Spleen (tissue), 13 donors: ENCODE measurements at regions of chr4 and their contacts with region 1.

Region 1: DNA sequence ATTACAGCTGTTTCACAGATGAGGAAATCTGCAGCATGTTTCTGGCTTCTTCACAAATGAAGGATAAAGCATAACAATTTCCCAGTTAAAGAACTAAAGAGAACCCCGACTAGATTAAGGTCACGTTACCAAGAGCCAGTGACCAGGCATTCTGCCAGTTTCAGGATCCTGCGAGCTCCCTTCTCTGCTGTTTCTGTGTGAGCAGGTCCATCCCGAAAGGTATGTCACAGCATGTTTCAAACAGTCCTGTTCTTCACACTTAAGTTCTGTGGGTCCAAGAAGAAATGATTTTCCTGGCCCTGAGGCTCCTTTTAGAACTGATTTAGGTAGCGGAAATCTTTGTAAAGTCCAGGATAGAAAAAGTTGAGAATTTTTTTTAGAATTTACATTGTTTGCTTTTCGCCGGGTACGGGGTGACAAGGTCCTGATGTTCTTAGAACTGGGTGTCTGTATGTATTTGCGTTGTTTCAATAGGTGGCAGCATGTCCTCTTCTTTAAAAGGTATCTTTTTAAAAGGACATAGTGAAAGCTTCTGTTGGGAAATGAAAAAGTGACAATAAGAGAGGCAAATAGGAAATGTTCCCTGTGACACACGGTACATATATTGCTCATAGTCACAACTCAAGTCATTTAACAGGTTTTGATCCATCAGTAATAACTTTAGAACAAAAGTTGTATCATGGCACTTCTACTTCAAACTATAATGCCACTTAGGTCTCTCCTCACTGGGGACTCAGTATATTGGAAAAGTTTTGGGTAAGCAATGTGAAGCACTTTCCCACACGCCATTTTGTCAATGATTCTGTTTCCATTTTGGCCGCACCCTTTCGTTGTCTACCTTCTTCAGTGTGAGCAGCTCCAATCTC is 18.4 kb downstream of the IL21 start:
- DNase-seq: no peak
- H3K4me3 ChIP-seq: no peak overlapping the region
- H3K27ac ChIP-seq: no peak overlapping the region
- H3K4me1 ChIP-seq: no peaks in the 10 kb centered on the region
- H3K27me3 ChIP-seq: peaks cover 0 to 36% (median 0%) of the 10 kb centered on the region in 7 donors
- CTCF ChIP-seq: peak in 3 of 11 experiments; percentile 25 to 35 (median 33)
- POLR2A ChIP-seq: no peak

Region 2: DNA sequence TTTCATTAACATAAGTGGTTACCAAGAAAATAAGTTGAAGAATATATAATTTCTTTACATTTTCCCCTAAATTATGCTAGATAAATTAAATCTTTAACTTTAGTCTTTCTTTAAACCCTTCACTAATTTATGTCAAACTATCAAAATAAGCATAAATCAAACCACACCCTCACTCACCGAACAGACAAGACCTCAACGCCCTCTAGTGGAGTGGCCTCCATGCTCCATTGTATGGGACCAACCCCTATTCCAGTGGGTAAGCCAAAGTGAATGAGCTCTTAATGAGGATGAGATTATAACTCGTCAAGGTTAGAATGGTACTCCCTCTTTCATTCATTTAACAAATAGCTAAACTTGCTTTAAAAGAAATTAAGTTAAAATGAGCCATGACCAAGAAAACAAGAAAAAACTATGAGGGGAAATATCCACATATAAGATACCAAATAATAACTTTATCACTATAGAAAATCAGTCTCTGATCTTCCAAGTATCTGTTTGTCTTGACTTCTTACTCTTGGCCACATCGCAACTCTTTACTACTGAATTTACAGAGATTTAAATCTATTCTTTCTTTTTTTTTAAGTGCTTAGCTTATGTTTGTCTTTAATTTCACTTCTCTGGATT is 114.4 kb after region 1 on chr4:
- intact Hi-C with region 1: loop called (anchors 10 kb)
- DNase-seq: no peak
- H3K4me3 ChIP-seq: no peak overlapping the region
- H3K27ac ChIP-seq: no peak overlapping the region
- H3K4me1 ChIP-seq: no peaks in the 10 kb centered on the region
- H3K27me3 ChIP-seq: no peaks in the 10 kb centered on the region
- CTCF ChIP-seq: peak in 10 of 11 experiments; percentile 51 to 83 (median 75)
- POLR2A ChIP-seq: no peak

Region 3: DNA sequence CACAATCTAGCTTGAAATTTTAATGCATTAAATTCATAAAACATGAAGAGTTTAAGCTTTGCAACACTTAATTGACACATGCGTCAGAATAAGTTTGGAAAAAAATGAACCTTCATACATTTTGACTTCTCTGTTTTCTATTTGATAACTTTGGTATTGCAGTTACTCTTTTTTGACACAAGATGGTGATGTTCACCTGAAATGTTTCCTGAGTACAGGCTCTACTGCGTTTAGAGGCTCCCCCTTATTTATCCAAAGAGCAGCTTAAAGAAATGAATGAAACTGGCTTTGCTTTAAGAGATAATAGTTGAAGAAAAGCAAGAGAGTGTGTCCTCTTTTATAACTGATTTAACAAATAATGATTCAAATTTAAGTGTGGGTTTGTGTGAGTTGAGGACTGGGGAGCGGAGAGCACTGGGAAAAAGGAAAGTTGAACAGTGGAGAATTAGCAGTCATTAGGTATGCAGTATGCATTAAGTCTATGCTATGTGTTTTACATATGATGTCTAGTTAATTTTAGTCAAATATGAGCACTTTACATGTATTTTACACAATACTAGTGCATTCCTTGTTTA is 500.5 kb after region 1 on chr4:
- intact Hi-C with region 1: no loop called
- DNase-seq: no peak
- H3K4me3 ChIP-seq: no peak overlapping the region
- H3K27ac ChIP-seq: no peak overlapping the region
- H3K4me1 ChIP-seq: no peaks in the 10 kb centered on the region
- H3K27me3 ChIP-seq: no peaks in the 10 kb centered on the region
- CTCF ChIP-seq: peak; percentile 25 to 76 (median 66)
- POLR2A ChIP-seq: no peak